ENCODE measurements at regions of chr7 and their contacts with region 1.

Region 1: DNA sequence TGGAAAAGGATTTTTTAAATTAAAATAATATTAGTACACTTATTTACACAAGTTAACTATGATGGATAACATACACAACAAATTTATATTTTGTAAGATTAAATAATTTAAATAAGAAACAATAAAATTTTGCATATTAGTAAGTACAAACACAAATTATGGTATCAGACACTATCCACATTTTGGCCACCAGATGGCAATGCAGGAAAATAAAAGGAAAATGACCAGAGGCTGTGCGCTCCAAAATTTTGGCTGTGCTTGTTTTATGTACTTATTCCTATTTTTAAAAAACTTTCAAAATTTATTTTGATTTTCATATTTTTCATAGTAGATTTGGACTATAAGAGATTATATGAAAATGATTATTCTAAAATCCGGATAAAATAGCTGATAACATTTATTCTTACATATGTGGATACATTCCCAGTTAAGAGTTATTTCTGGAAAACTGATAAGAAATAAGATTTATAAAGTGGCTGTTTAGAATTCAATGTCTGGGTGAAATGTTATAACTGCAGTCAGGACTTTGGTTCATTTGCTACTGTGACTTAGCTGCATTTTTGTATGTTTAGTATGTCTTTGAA is 274.7 kb upstream of the HGF start:
- DNase-seq: peak in 4 of 10 donors; percentile 28 to 83 (median 50)

Region 2: GRCh38 chr7:81715984-81716588 is 328.5 kb before region 1 on chr7:
- intact Hi-C with region 1: no loop called
- DNase-seq: no peak

Region 3: DNA sequence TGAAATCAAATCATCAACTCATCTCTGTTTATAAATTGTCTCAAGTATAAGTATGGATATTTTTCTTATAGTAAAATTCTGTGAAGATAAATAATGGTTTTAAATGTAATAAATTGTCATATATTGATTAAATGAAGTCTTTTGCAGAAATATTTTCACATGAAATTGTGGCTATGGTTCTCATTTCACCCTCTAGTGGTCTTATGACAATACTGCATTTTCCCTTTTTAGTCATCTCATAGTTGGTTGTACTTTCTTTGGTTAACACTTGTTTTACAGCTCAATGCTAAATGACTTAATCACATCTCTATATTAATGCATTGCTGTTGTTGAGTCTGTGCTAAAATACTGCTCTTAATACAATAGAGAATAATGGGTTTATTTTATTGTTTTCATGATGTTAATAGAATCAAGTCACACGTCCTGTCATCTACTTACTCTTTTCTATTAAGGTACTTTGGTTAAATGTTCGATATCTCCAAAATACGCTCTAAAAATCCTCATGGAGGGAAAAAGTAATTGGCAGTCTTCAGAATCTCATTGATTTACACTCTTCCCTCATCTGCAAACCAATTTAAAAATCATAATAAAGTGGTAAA is 437.0 kb after region 1 on chr7:
- intact Hi-C with region 1: loop called (anchors 5 kb)
- DNase-seq: no peak

Region 4: DNA sequence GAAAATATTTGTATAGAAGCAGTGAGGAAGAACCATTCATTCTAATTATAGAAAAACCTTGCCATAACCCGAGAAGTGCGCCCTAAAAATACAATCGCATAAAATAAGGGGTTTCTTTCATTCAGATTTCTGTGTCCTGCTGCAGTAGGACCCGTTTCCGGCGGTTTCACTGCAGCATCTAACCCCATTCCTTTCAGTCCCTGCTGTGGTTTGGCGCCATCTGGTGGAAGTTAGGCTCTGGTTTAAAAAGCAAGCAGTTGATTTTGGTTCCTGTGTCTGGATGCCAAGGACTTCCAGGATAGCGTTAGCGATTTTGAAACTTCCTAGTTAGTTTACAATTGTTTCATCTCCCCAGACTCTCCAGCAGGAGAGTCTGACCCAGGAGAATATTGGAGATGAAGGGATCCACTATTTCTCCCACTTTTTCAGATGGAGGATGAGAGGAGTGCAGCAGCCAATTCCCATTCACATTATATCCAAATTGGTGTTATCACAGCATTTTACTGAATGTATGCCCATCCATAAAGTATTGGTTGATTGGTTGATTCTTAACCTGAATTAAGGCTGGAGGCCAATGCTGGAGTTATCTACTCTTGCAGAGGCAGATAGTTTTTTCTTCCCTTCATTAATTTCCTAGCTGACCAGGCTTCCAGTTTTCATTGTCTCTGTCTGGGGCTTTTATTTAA is 527.7 kb after region 1 on chr7:
- intact Hi-C with region 1: loop called (anchors 5 kb)
- DNase-seq: peak; percentile 65 to 96 (median 90)

Region 5: DNA sequence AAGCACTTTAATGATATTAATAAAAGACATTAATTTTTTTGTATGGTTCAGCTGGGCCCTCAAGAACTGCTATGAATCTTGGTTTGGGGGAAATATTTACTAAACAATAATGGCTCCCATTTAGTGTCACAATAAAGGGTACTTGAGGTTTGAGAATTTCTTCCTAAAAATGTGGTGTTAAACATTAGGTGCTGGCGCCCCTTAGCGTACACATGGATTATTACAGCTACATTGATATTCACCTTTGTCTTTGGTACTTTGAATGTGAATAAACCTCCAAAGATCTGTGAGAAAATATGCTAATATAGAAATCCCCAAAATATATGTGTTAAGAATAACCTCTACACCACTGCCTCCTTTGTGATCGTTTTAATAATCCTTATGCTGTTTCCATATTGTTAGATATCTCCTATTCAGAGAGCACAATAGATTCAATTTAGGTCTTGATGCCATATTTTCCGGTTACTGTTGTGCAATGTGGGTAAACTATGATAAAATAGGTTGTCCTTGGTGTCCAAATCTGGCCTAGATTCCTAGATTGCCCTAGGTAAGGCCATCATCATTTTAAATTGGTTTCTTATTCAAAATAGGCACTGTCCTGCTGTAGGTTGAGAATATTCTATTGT is 560.8 kb after region 1 on chr7:
- intact Hi-C with region 1: loop called (anchors 5 kb)
- DNase-seq: peak in 2 of 10 donors; percentile 10 to 37

Region 6: DNA sequence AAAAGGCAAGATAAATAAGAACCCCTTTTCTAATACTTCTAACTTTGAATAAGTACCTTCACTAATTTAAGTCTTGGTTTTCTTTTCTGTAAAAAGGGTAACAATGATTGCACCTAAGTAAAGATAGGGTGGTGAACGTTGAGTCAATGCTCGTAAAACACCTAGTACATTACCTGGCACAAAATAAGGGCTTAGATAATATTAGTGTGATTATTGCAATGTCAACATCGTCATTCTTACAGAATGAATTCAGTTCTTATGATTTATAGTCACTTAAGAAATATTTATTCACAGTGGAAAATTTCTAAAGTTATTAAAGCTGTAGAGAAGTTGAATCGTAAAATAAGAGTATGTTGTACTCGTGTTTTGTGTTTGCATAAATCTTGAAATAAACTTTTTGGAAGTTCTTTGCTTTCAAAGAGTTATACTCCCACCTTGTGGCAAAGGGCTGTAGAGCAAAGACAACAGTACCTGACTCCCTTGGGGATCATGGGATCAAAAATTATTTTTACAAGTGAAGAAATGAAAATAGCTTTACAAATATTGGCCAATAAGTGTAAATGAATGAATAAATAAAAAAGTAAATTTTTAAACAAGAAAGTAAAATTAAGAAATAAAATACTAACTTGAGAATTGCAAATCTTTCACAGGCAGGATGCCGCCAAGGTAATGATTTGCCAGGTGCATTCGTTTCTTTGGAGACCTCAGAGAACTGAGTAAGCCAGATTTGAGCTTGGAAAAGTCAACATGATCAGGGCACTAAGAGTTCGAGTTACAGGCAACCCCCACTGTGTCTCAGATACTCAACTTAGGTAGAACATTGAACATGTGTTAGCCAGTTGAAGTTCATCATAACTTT is 684.8 kb after region 1 on chr7:
- intact Hi-C with region 1: loop called (anchors 5 kb)
- DNase-seq: no peak